Activated B cell treated with CpG ODN at 0.5 μM for 24 hours (primary cell): ENCODE measurements at regions of chr10 and their contacts with region 1.

Region 1: GRCh38 chr10:3595736-3596135 is 189.3 kb downstream of the KLF6 start:
- DNase-seq: no peak
- ATAC-seq: no peak
- H3K4me3 Mint-ChIP-seq: no peak overlapping the region
- H3K27ac Mint-ChIP-seq: no peak overlapping the region
- H3K4me1 Mint-ChIP-seq: no peaks in the 10 kb centered on the region
- H3K27me3 Mint-ChIP-seq: peaks cover 7% of the 10 kb centered on the region
- CTCF ChIP-seq: no peak

Region 2: GRCh38 chr10:3640816-3641215 is 45.1 kb after region 1 on chr10:
- CTCF ChIA-PET with region 1: no interaction called
- POLR2A ChIA-PET with region 1: no interaction called
- intact Hi-C with region 1: loop called (anchors 1 kb)
- DNase-seq: no peak
- ATAC-seq: no peak
- H3K4me3 Mint-ChIP-seq: no peak overlapping the region
- H3K27ac Mint-ChIP-seq: no peak overlapping the region
- H3K4me1 Mint-ChIP-seq: peaks cover 2% of the 10 kb centered on the region
- H3K27me3 Mint-ChIP-seq: peaks cover 4% of the 10 kb centered on the region
- CTCF ChIP-seq: no peak

Region 3: DNA sequence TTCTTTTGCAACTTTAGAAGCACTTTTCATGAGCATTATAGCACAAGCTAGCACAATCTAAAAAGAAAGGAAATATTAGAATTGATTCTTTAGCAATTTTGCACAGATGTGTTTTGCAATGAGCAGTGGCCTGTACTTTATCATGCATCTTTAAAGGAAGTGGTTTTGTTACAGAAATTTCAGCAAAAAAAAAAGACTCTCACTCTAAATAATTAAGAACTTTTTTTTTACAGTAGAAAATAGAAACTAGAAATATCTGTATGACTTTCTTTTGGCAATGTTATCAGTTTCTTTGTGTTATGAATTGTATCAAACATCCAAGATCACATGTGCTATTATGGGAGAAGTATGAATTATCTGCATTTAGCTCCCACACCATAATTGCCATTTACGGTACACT is 384.9 kb after region 1 on chr10:
- CTCF ChIA-PET with region 1: no interaction called
- POLR2A ChIA-PET with region 1: no interaction called
- intact Hi-C with region 1: no loop called
- DNase-seq: no peak
- ATAC-seq: no peak
- H3K4me3 Mint-ChIP-seq: no peak overlapping the region
- H3K27ac Mint-ChIP-seq: no peak overlapping the region
- H3K4me1 Mint-ChIP-seq: peaks cover 17% of the 10 kb centered on the region
- H3K27me3 Mint-ChIP-seq: no peaks in the 10 kb centered on the region
- CTCF ChIP-seq: no peak